Mammary epithelial cell (primary cell): ENCODE measurements at regions of chr21 and their contacts with region 1.

Region 1: GRCh38 chr21:31558962-31559367 is 100.5 kb upstream of the SOD1 start:
- DNase-seq: peak; percentile 97
- H3K4me3 ChIP-seq: peak overlapping the region; percentile 34 to 68 (median 64)
- H3K27ac ChIP-seq: no peak overlapping the region
- H3K4me1 ChIP-seq: peaks cover 25% of the 10 kb centered on the region
- H3K27me3 ChIP-seq: peaks cover 2% of the 10 kb centered on the region
- CTCF ChIP-seq: no peak

Region 2: DNA sequence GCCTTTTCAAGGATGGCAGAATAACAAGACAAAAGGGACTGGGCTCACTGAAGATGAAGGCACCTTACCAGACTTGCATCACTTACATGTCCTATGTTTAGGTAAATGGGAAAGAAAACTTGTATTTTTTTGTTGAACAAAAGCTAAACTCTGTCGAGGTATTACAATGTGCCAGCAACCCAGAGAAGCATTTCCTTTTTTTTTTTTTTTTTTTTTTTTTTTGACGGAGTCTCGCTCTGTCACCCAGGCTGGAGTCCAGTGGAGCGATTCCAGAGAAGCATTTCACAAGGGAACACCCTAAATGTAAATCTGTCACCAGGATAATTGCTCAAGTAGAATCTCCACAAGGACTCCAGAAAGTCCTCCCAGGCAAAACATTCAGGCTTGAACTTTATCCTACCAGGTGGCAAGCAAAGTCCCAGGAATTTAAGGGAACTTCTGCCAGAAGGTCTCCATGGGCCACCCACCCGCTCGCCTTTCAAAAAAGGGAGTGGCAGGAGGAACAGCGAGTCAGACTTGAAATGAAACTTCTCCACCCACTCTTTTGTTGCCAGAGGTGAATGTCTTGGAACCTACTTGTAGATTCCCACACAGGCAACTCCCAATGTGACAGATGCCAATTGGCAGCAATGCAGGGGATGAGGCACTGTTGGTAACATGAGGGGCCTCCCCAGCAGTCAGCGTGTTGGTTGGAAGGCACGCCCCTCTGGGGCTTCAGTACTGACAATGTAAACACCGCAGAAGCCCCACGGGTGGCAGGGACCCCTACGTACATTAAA is 339.9 kb before region 1 on chr21:
- CTCF ChIA-PET with region 1: no interaction called
- dilution Hi-C with region 1: no loop called
- in situ Hi-C with region 1: no loop called
- intact Hi-C with region 1: loop called (anchors 5 kb)
- DNase-seq: peak; percentile 92
- H3K4me3 ChIP-seq: no peak overlapping the region
- H3K27ac ChIP-seq: peak overlapping the region; percentile 64
- H3K4me1 ChIP-seq: peaks cover 34% of the 10 kb centered on the region
- H3K27me3 ChIP-seq: no peaks in the 10 kb centered on the region
- CTCF ChIP-seq: no peak

Region 3: DNA sequence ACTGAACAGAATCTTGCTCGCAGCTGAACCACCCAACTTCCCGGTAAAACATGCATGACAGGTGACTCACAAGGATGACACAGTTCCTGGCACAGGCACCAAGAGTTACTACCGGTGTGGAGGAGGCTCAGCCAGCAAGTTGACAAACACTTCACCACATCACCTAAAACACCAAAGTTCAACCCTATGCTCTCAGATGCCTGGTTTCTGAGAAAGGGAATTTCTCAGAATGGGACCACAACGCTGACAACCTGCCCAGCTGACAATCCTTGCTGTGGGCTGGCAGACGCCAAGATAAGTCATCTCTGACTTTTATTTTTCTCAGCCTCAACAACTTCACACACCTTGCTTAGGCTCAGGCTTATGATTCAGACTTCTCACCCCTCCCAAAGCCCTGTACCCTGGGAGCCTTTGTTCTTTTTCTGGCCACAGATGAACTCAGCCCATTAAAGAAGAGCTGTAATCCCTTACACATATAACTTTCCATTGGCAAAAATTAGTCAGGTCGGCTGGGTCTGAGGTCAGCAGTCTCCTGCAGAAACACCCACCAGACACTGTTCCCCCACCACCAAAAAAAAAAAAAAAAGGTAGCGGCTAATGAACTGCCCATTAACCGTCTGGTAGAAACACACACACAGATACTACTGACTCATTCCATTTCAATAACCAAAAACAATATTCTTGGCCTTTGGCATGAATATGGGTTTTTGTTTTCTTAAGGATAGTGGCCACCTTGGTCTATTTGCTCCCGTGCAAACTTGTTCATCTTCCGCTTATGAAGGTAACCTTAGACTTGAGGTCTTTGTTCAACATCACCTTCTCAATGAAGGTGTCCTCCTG is 204.1 kb before region 1 on chr21:
- CTCF ChIA-PET with region 1: no interaction called
- dilution Hi-C with region 1: no loop called
- in situ Hi-C with region 1: loop called in 1 of 2 experiments (anchors 25 kb)
- intact Hi-C with region 1: loop called (anchors 5 kb)
- DNase-seq: peak; percentile 99
- H3K4me3 ChIP-seq: no peak overlapping the region
- H3K27ac ChIP-seq: peak overlapping the region; percentile 91
- H3K4me1 ChIP-seq: peaks cover 37% of the 10 kb centered on the region
- H3K27me3 ChIP-seq: no peaks in the 10 kb centered on the region
- CTCF ChIP-seq: no peak

Region 4: DNA sequence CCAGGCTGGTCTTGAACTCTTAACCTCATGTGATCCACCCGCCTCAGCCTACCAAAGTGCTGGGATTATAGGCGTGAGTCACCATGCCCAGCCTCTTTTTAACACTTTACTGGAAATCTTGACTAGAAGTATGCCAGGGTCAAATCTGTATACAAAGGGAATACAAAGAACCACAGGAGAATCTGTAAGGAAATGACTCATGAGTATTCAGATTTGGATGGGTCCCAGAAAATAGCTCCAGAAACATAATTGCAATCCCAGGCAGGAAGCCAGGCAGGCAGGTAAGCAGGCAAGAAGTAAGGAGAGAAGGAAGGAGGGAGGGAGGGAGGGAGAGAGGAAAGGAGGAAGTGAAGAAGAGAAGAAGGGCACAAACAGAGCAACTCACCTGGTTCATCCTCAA is 192.1 kb before region 1 on chr21:
- CTCF ChIA-PET with region 1: no interaction called
- dilution Hi-C with region 1: no loop called
- in situ Hi-C with region 1: loop called in 1 of 2 experiments (anchors 25 kb)
- intact Hi-C with region 1: loop called (anchors 2 kb)
- DNase-seq: peak; percentile 95
- H3K4me3 ChIP-seq: no peak overlapping the region
- H3K27ac ChIP-seq: no peak overlapping the region
- H3K4me1 ChIP-seq: peaks cover 11% of the 10 kb centered on the region
- H3K27me3 ChIP-seq: no peaks in the 10 kb centered on the region
- CTCF ChIP-seq: no peak

Region 5: DNA sequence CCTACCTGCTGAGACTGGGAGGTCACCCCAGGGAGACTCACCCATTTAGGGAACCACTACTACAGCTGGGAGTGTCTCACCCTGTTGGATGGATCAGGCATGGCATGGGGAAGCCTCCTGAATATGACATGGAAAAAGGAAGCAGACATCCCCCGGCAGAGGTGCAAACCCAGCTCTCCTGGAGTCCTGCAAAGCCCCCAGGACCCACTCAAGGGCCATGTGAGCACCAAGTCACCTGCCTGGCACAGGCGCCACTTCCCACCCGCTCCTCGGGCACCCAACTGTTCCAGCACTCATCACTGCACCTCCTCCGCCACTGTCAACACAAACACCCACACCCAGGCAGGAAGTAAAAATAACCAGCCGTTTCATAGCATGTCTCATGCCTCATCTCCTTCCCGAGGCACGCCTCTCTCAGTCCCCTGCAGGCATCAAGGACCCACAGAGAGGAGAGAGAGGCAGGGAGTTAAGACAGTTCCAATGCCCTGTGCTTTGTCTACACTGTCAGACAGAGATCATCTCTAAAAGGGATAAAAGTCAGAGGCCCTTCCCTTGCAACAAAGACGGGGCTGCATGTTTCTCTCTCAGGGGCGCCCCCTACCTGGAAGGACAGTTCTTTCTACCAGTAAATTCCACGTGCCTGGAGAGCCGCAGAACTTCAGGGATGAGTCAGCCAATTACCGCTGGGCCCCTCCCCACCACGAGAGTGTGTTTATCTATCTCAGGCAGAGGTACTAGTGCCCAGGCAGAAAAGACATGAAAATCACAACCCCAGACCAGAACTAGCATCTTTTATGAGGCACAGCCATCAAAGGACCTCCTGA is 49.6 kb before region 1 on chr21:
- CTCF ChIA-PET with region 1: no interaction called
- dilution Hi-C with region 1: no loop called
- in situ Hi-C with region 1: no loop called
- intact Hi-C with region 1: loop called (anchors 10 kb)
- DNase-seq: peak; percentile 48
- H3K4me3 ChIP-seq: no peak overlapping the region
- H3K27ac ChIP-seq: no peak overlapping the region
- H3K4me1 ChIP-seq: no peaks in the 10 kb centered on the region
- H3K27me3 ChIP-seq: no peaks in the 10 kb centered on the region
- CTCF ChIP-seq: peak in 1 of 2 donors; percentile 33

Region 6: DNA sequence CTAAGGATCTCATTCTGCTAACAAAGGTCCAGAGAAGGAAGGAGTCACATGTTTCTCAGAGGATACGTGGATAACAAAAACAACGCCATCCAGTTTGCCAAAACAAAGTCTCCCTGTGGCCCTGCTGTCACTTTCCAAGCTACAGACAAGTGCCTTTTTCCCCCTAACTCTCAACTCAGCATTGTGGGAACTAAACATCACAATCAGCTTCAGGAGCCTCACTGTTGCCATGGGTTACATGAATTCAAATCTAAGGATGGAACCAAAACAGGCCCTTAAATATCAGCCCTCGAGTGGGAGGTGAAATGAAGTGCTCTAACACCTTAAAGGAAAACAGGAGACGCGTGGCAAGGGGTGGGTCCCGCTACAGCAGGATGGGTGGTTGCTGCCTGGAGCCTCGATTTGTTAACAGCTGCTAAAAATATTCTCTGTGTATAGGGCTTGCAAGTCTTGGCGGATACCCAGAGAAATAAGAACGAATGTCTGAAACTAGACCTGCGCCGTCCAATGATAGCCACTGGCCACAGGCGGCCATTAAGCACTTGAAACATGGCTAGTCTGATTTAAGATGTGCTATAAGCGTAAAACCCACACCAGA is 34.1 kb after region 1 on chr21:
- CTCF ChIA-PET with region 1: no interaction called
- dilution Hi-C with region 1: no loop called
- in situ Hi-C with region 1: no loop called
- intact Hi-C with region 1: no loop called
- DNase-seq: no peak
- H3K4me3 ChIP-seq: no peak overlapping the region
- H3K27ac ChIP-seq: no peak overlapping the region
- H3K4me1 ChIP-seq: no peaks in the 10 kb centered on the region
- H3K27me3 ChIP-seq: peaks cover 3% of the 10 kb centered on the region
- CTCF ChIP-seq: no peak

Region 7: DNA sequence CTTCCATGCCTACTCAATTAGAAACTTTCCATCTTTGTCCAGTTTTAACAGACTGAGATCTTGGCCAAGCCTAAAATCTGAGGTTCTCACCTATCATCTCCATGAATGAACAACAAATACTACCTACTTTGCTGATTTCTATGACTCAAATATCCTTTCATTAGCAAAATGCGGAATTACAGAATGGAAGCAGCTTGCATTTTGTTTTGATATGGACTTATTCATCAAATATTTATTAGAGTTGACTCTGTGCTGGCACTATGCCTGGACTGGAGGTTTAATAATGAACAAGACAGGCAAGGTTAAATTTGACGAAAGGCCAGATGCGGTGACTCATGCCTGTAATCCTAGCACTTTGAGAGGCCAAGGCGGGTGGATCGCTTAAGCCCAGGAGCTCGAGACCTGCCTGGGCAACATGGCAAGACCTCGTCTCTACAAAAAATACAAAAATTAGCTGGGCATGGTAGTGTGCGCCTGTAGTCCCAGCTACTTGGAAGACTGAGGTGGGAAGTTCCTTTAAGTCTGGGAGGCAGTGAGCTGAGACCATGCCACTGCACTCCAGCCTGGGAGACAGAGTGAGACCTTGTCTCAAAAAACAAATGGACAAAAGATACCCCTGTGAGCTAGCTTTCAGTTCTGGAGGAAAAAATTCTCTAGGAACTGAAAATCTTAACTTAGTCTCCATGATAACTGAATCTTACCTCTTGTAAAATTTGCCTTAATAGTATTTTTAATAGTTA is 71.2 kb after region 1 on chr21:
- CTCF ChIA-PET with region 1: no interaction called
- dilution Hi-C with region 1: no loop called
- in situ Hi-C with region 1: no loop called
- intact Hi-C with region 1: loop called (anchors 1 kb)
- DNase-seq: peak; percentile 98
- H3K4me3 ChIP-seq: no peak overlapping the region
- H3K27ac ChIP-seq: peak overlapping the region; percentile 16
- H3K4me1 ChIP-seq: peaks cover 24% of the 10 kb centered on the region
- H3K27me3 ChIP-seq: no peaks in the 10 kb centered on the region
- CTCF ChIP-seq: no peak